AG04449 (cell line): ENCODE measurements at regions of chr16 and their contacts with region 1.

Region 1: GRCh38 chr16:84175350-84176081 is 11.3 kb downstream of the TAF1C start:
- DNase-seq: no peak
- H3K4me3 ChIP-seq: no peak overlapping the region
- CTCF ChIP-seq: peak; percentile 89

Region 2: GRCh38 chr16:84072014-84072413 is 103.5 kb before region 1 on chr16:
- CTCF ChIA-PET with region 1: interaction called, 39 read pairs
- POLR2A ChIA-PET with region 1: no interaction called
- DNase-seq: no peak
- H3K4me3 ChIP-seq: no peak overlapping the region
- CTCF ChIP-seq: no peak

Region 3: GRCh38 chr16:84116720-84117493 is 58.6 kb before region 1 on chr16 and contains the start of gene MBTPS1:
- CTCF ChIA-PET with region 1: interaction called, 24 read pairs
- POLR2A ChIA-PET with region 1: interaction called, 5 read pairs
- DNase-seq: peak; percentile 73
- H3K4me3 ChIP-seq: peak within 1 kb of the TSS; percentile 98
- CTCF ChIP-seq: no peak

Region 4: GRCh38 chr16:84156342-84156784 is 19.2 kb before region 1 on chr16:
- CTCF ChIA-PET with region 1: interaction called, 18 read pairs
- POLR2A ChIA-PET with region 1: no interaction called
- DNase-seq: no peak
- H3K4me3 ChIP-seq: no peak overlapping the region
- CTCF ChIP-seq: no peak

Region 5: GRCh38 chr16:84199861-84200260 is 24.3 kb after region 1 on chr16:
- CTCF ChIA-PET with region 1: no interaction called
- POLR2A ChIA-PET with region 1: no interaction called
- DNase-seq: no peak
- H3K4me3 ChIP-seq: no peak overlapping the region
- CTCF ChIP-seq: no peak